ENCODE measurements at regions of chr7 and their contacts with region 1.

Region 1: DNA sequence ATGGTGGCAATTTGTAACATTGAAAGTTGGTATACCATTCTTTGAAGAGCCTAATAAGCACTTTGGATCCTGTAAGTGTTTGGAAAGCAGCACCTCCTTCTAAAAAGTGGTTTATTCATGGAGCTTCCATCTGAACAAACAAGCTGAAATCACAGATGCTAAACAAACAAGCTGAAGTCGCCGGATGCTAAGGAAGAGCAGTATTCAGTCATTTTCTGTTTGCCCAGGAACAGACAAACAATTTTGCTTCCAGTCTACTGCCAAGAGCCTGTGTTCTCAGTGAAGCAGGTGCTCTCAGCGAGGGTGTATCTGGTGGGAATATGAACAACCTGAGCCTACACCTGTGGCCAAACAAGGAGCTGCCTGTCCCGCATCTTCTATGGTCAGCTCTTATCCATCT is 6.3 kb downstream of the COL28A1 start:
- DNase-seq: no peak
- H3K4me3 ChIP-seq: no peak overlapping the region
- H3K27ac ChIP-seq: no peak overlapping the region
- H3K27me3 ChIP-seq: no peaks in the 10 kb centered on the region
- CTCF ChIP-seq: no peak

Region 2: GRCh38 chr7:6489612-6490011 is 1039.7 kb before region 1 on chr7:
- in situ Hi-C with region 1: no loop called
- DNase-seq: no peak
- H3K4me3 ChIP-seq: no peak overlapping the region
- H3K27ac ChIP-seq: no peak overlapping the region
- H3K27me3 ChIP-seq: no peaks in the 10 kb centered on the region
- CTCF ChIP-seq: peak; percentile 11

Region 3: DNA sequence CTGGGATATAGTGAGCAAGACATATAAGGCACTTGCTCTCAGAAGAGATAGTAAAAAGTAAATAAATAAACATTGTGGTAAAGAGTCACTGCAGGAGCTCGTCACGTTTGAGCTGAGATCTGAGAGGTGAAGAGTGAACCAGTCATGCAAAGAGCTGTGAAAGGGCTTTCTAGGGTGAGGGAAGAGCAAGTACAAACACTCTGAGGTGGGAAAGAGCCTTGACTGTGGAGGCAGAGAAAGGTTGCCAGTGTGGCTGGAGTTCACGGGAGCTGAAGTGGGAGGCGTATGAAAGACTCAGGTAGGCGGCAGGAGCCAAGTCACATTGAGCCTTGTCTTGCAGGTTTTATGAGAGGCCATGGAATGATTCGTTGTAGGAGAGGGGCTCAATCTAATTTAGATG is 206.0 kb before region 1 on chr7:
- in situ Hi-C with region 1: no loop called
- DNase-seq: no peak
- H3K4me3 ChIP-seq: no peak overlapping the region
- H3K27ac ChIP-seq: no peak overlapping the region
- H3K27me3 ChIP-seq: no peaks in the 10 kb centered on the region
- CTCF ChIP-seq: no peak

Region 4: GRCh38 chr7:7438851-7439250 is 90.5 kb before region 1 on chr7:
- in situ Hi-C with region 1: loop called (anchors 25 kb)
- DNase-seq: peak; percentile 97
- H3K4me3 ChIP-seq: no peak overlapping the region
- H3K27ac ChIP-seq: peak overlapping the region; percentile 59
- H3K27me3 ChIP-seq: no peaks in the 10 kb centered on the region
- CTCF ChIP-seq: peak; percentile 35

Measured in brain microvascular endothelial cell (primary cell).